HCT116 (cell line): ENCODE measurements at regions of chr1 and their contacts with region 1.

Region 1: GRCh38 chr1:235075188-235075926 is 53.3 kb downstream of the TOMM20 start:
- DNase-seq: no peak
- ATAC-seq: no peak
- H3K4me3 ChIP-seq: no peak overlapping the region
- H3K27ac ChIP-seq: no peak overlapping the region
- H3K4me1 ChIP-seq: peaks cover 20 to 53% of the 10 kb centered on the region in 2 experiments
- H3K27me3 ChIP-seq: peaks cover 6% of the 10 kb centered on the region; the same call in 1 of the 2 replicates
- CTCF ChIP-seq: no peak
- POLR2A ChIP-seq: no peak
- RAD21 ChIP-seq: no peak

Region 2: DNA sequence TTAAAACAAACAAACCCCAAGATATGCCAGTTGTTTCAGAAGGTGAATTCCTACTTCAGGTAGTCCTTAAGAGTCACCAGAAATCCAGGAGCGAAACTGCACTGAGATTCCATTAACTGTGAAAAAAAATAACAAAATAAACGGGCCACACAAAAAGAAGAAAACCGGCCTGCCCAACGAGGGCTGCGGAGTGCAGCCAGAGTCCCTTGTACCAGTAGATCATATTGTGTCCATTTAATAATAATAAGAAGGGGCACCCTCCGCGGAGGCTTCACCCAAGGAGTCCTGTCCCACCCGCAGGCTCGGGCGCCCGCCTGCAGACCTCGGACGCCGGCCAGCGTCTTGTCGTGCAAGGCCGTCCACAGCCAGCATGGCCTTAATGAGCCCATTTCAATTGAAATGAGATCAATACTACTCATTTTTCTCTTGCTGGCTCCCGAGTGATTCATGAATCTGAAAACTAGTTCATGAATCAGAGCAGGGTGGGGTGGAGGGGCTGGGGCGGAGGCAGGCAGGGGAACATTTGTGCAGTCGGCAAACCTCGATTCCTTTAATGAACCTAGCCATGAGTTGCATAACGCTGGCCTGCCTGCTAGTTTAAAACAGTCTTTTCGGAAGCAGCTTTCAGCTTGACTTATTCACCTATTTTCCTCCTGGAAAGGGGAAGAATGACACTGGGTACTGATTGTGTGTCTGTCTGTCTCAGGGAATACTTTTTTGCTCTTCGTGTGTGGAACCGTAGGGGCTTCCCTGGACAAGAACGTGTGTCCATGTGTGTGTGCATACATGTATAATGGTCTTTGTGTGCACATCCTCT is 352.2 kb before region 1 on chr1:
- CTCF ChIA-PET with region 1: no interaction called
- POLR2A ChIA-PET with region 1: no interaction called
- RAD21 ChIA-PET with region 1: interaction called in 1 of 2 experiments, 6 read pairs
- intact Hi-C with region 1: loop called (anchors 5 kb)
- DNase-seq: peak; percentile 79
- ATAC-seq: peak; percentile 24
- H3K4me3 ChIP-seq: peak overlapping the region; percentile 16 to 46
- H3K27ac ChIP-seq: peak overlapping the region; percentile 66
- H3K4me1 ChIP-seq: peaks cover 46 to 63% of the 10 kb centered on the region in 2 experiments
- H3K27me3 ChIP-seq: no peaks in the 10 kb centered on the region; the same call in 1 of the 2 replicates
- CTCF ChIP-seq: no peak
- POLR2A ChIP-seq: no peak
- RAD21 ChIP-seq: peak; percentile 30; the same call in 1 of the 2 replicates

Region 3: DNA sequence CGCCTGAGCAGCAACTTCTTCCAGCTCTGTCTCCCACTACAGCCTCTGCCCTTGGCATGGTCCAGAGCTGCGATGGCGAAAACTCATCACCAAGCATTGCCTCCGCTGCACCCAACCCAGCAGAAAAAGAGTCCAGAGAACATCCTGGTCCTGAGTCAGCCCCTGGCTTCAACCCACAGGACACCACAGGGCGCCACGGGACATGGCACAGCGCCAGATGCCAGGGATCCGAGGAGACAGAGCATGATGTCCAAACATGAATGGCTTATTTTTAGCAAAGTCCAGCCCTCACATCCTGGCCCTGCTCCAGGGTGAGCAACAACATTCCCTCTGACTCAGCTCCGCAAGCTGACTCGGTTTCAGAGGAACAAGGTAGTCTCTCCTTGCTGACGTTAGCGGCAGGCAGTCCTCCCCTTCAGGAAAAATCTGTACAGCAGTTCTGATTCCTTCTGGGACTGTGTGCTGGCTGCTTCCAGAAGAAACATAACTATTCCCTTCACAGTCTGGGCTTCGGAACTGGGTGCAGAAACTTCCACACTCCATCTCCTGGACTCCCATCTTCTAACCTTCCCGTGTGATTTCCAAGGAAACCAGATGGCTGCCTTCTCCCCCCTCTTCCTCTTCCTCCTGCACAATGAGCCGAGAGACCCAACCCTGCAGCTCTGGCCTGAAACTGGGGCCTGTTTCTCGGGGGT is 78.0 kb before region 1 on chr1:
- CTCF ChIA-PET with region 1: no interaction called
- POLR2A ChIA-PET with region 1: no interaction called
- RAD21 ChIA-PET with region 1: no interaction called
- intact Hi-C with region 1: loop called (anchors 2 kb)
- DNase-seq: peak; percentile 97
- ATAC-seq: peak; percentile 75
- H3K4me3 ChIP-seq: peak overlapping the region; percentile 29 to 45
- H3K27ac ChIP-seq: peak overlapping the region; percentile 52
- H3K4me1 ChIP-seq: peaks cover 30 to 38% of the 10 kb centered on the region in 2 experiments
- H3K27me3 ChIP-seq: no peaks in the 10 kb centered on the region; the same call in 1 of the 2 replicates
- CTCF ChIP-seq: no peak
- POLR2A ChIP-seq: no peak
- RAD21 ChIP-seq: peak; percentile 63

Region 4: GRCh38 chr1:235917267-235917811 is 842.0 kb after region 1 on chr1:
- CTCF ChIA-PET with region 1: no interaction called
- POLR2A ChIA-PET with region 1: no interaction called
- RAD21 ChIA-PET with region 1: no interaction called
- intact Hi-C with region 1: no loop called
- DNase-seq: peak; percentile 88
- ATAC-seq: peak; percentile 80
- H3K4me3 ChIP-seq: 0 out of 4 replicates have a peak overlapping the region, but pooled peaks of 1 of the 2 experiments have one; percentile 10
- H3K27ac ChIP-seq: peak overlapping the region; percentile 56; the same call in 1 of the 2 replicates
- H3K4me1 ChIP-seq: peaks cover 15 to 55% of the 10 kb centered on the region in 2 experiments
- H3K27me3 ChIP-seq: no peaks in the 10 kb centered on the region
- CTCF ChIP-seq: no peak
- POLR2A ChIP-seq: no peak
- RAD21 ChIP-seq: peak; percentile 6; the same call in 1 of the 2 replicates